Activated T-helper 2 cell treated with anti-CD3 and anti-CD28 coated beads, Interferon-gamma antibody, Interleukin-2, Interleukin-4, amounts not matched to agents 10 μg/mL and 5 μg/mL and 100 μg/mL, durations not matched to agents 14 hours and 24 hours and 36 hours (primary cell): ENCODE measurements at regions of chr17 and their contacts with region 1.

Region 1: GRCh38 chr17:80426681-80427326 is 11.8 kb downstream of the ENDOV start:
- DNase-seq: peak; percentile 81
- H3K4me3 Mint-ChIP-seq: no peak overlapping the region
- H3K27ac Mint-ChIP-seq: no peak overlapping the region
- H3K4me1 Mint-ChIP-seq: peaks cover 10% of the 10 kb centered on the region
- H3K27me3 Mint-ChIP-seq: no peaks in the 10 kb centered on the region

Region 2: DNA sequence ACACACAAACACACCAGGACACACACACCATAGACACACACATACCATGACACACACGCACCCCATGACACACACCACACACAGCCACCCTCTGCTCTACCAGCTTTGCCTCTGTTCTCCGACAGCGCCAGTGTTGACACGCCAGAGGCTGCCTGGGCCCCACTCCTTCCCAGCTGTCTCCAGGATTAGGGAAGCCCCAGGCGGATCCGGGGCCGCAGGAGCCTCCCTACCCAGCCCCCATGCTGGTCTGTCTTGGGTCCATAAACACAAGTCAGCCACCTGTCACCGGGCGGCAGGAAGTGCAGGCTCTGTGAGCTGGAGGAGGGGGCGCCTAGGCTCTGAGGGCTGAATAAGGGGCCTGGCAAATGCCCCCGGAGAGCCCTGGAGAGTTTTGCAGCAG is 401.7 kb before region 1 on chr17:
- intact Hi-C with region 1: no loop called
- DNase-seq: no peak
- H3K4me3 Mint-ChIP-seq: no peak overlapping the region
- H3K27ac Mint-ChIP-seq: no peak overlapping the region
- H3K4me1 Mint-ChIP-seq: no peaks in the 10 kb centered on the region
- H3K27me3 Mint-ChIP-seq: peaks cover 1% of the 10 kb centered on the region

Region 3: GRCh38 chr17:80454557-80455335 is 27.9 kb after region 1 on chr17:
- intact Hi-C with region 1: no loop called
- DNase-seq: peak; percentile 96
- H3K4me3 Mint-ChIP-seq: peak overlapping the region; percentile 92
- H3K27ac Mint-ChIP-seq: peak overlapping the region; percentile 95
- H3K4me1 Mint-ChIP-seq: peaks cover 25% of the 10 kb centered on the region
- H3K27me3 Mint-ChIP-seq: peaks cover 12% of the 10 kb centered on the region

Region 4: DNA sequence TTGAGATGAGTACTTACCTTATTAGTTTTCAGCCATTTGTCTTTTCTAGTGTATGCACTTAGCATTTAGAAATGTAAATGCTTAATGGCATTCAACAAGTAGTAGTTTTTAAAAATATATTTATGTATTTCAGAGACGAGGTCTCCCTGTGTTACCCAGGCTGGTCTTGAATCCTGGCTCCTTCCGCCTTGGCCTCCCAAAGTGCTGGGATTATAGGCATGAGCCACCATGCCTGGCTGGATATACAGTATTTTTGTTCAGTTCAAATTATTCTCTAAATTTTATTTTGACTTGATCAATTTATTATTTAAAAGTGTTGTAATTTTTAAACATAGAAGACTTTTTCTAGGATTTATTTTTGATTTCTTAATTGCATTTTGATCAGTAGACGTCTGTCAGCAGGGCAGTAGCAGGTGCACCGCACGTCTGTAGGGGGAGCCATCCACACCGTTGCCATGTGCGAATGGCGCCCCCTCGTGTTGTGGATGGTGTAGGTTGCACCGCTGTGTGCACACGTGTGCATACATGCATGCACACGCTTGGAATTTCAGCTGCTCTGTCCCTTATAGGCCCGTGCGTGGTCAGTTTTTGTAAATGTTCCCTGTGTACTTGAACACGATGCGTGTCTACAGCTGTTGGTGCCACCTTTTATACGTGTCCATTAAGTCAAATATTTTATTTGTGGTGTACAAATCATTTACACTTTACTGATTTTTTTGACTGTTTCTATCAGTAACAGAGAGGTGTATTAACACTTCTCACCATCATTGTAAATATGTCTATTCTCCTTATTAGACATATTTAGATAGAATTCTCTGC is 148.5 kb after region 1 on chr17:
- intact Hi-C with region 1: loop called (anchors 1 kb)
- DNase-seq: peak; percentile 82
- H3K4me3 Mint-ChIP-seq: no peak overlapping the region
- H3K27ac Mint-ChIP-seq: no peak overlapping the region
- H3K4me1 Mint-ChIP-seq: peaks cover 24% of the 10 kb centered on the region
- H3K27me3 Mint-ChIP-seq: no peaks in the 10 kb centered on the region

Region 5: GRCh38 chr17:80981062-80981902 is 554.5 kb after region 1 on chr17:
- intact Hi-C with region 1: loop called (anchors 1 kb)
- DNase-seq: peak; percentile 24
- H3K4me3 Mint-ChIP-seq: no peak overlapping the region
- H3K27ac Mint-ChIP-seq: no peak overlapping the region
- H3K4me1 Mint-ChIP-seq: peaks cover 7% of the 10 kb centered on the region
- H3K27me3 Mint-ChIP-seq: peaks cover 4% of the 10 kb centered on the region